ENCODE measurements at regions of chr18 and their contacts with region 1.

Region 1: GRCh38 chr18:9260388-9261380 is 73.9 kb upstream of the TWSG1 start:
- DNase-seq: no peak
- ATAC-seq: no peak

Region 2: DNA sequence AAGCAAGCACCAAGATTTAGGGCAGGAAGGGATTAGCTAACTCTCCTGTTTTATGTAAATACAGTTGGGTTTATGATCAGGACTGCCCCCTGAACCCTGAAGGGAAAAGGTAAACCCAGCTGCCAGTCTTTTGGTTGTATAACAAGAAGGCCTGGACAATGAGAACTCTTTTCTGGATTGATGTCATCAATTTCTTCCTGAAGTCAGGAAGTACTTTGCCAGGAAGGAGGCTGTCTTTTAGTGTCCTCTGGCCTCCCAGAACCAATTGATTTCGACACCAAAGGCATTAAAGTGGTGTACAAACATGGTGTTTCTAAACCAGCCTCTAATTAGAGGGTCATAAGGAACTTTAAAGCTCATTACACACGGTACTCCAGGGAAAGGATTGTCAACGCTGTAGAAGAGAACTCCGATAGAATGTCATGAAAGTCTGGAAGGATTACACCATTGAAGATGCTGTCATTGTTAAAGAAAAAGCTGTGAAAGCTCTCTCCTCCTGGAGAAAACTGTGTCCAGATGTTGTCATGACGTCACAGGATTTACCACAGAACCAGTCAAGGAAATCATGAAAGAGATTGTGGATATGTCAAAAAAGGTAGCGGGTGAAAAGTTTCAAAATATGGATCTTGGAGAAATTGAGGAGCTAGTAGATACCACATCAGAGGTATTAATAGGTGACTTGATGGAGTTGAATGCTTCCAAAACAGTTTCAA is 45.3 kb before region 1 on chr18:
- intact Hi-C with region 1: loop called (anchors 2 kb)
- DNase-seq: no peak
- ATAC-seq: no peak

Region 3: DNA sequence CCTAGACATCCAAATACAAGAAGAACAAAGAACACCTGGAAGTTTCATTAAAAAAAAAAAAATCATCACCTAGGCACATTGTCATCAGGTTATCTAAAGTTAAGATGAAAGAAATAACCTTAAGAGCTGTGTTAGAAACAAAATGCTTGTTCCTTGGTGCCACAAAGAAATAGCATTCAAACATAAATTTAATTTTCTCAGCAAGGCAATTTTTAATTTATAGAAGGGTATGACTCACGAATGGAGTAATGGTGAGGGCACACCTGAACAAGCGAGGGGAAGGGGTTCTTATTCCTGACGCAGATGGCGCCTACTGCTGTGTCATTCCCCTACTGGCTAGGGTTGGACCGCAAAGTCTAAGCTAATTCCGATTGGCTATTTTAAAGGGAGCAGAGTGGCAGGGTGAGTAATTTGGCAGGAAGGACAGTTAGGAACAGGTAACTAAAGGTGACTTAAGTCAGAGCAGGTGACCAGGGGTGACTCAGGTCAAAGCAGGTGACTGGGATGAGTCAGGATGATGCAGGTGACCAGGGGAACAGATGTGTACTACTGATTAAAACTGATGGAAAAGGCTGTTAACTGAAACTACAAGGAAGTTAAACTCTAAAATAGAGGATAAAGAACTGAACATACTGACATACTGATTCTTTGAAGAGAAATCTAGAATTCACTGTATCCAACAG is 43.8 kb after region 1 on chr18:
- intact Hi-C with region 1: no loop called
- DNase-seq: no peak
- ATAC-seq: no peak

Measured in sciatic nerve (tissue), 2 donors.